Panc1 (cell line): ENCODE measurements at regions of chr14 and their contacts with region 1.

Region 1: DNA sequence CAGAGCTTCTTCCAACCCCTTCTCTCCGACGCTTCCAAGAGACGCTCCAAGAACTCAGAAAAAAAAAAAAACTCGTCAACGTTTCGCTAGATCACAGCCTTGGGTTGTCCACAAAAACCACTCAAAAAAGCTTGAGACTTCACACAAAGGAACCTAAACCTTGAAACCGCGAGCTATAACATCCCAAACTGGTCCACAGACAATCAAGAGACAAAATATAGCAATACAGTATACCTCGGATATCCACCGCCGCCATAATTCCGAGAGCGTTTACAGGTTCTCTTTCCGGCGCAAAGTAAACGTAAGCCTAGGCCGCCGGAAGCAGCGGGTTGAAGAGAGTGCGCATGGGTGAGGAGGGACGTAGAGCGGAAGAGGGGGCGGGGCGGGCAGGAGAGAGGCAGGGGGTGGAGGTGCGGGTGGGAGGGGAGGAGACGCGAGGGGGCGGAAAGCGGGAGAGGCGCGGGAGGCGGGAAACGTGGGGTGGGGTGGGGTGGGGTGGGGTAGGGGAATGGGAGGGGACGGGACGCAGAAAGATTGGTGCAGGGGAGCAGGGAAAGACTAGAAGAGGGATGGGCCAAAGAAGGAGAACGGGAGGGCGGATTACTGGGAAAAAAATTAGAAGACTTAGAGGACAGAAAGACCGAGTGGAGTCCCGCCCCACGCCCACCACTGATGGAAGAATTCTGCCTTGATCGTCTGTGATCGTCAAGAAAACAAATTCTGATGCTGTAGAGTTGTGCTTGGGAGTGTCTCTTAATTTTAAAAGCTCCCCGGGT is at the start of gene MED6:
- DNase-seq: peak; percentile 48
- ATAC-seq: peak; percentile 99
- H3K4me3 ChIP-seq: peak within 1 kb of the TSS; percentile 99 to 100
- H3K27ac ChIP-seq: peak within 1 kb of the TSS; percentile 98
- H3K4me1 ChIP-seq: peaks cover 11% of the 10 kb centered on the region
- H3K27me3 ChIP-seq: no peaks in the 10 kb centered on the region; the same call in 1 of the 2 replicates
- CTCF ChIP-seq: no peak
- total RNA-seq, gene MED6: 24.4 TPM

Region 2: GRCh38 chr14:70045844-70046535 is 554.6 kb before region 1 on chr14:
- CTCF ChIA-PET with region 1: interaction called, 12 read pairs
- POLR2A ChIA-PET with region 1: no interaction called
- in situ Hi-C with region 1: no loop called
- intact Hi-C with region 1: no loop called
- DNase-seq: no peak
- ATAC-seq: peak; percentile 98
- H3K4me3 ChIP-seq: no peak overlapping the region
- H3K27ac ChIP-seq: no peak overlapping the region
- H3K4me1 ChIP-seq: no peaks in the 10 kb centered on the region
- H3K27me3 ChIP-seq: peaks cover 2% of the 10 kb centered on the region
- CTCF ChIP-seq: peak; percentile 85

Region 3: DNA sequence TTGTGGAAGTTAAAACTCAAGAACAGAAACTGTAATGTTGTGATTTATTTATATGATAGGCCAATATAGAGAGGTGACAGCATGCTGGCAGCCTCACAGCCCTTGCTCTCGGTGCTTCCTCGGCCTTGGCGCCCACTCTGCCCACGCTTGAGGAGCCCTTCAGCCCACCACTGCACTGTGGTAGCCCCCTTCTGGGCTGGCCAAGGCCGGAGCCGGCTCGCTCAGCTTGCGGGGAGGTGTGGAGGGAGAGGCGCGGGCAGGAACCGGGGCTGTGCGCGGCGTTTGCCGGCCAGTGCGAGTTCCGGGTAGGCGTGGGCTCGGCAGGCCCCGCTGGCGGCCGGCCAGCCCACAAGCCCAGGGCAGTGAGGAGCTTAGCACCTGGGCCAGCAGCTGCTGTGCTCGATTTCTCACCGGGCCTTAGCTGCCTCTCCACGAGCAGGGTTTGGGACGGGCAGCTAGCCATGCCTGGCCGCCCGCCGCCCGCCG is 346.1 kb before region 1 on chr14:
- CTCF ChIA-PET with region 1: no interaction called
- POLR2A ChIA-PET with region 1: interaction called, 10 read pairs
- in situ Hi-C with region 1: no loop called
- intact Hi-C with region 1: no loop called
- DNase-seq: no peak
- ATAC-seq: peak; percentile 87
- H3K4me3 ChIP-seq: peak overlapping the region; percentile 37 to 42
- H3K27ac ChIP-seq: no peak overlapping the region
- H3K4me1 ChIP-seq: no peaks in the 10 kb centered on the region
- H3K27me3 ChIP-seq: 0 out of 2 replicates have a peak, but pooled peaks cover 6% of the 10 kb centered on the region
- CTCF ChIP-seq: no peak

Region 4: DNA sequence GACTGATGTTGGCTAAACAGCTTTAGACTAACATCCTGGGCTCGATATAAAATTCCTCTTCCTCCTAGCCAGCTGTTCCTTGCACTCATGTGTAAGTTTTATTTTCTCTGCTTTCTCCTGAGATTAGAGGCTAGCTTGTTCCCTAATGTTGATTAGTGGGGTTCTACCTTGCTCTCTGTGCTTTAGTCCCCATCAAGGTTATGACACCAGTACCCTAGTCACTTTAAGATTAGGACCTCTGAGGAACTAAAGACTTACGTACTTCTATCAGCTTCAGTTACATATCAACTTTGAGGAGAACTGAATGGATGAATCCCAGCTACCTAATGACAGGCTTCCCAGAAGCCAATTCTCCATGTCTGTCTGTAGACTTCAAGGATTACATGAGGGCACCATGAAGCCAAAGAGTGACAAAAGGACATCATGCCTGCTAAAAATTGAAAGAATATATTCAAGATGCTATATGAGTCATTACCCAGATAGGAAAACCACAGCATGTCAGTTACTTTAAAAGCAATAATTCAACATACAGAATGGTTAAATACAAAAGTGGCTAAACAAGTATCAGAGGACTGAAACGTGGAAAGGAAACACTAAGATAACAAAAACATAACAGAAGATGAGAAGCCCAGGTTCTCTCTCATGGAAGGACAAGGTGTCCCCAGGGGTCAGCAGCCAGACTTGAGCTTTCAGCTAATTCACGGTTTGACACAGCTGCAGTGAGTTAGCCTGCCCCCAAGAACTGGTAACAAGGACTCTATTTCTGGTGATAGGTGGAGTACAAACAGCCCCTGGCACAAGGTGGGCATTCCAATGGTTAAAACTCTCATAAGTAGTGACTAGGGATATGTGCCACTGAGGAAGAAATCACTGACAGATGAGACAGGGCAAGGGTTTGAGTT is 86.2 kb before region 1 on chr14:
- CTCF ChIA-PET with region 1: no interaction called
- POLR2A ChIA-PET with region 1: no interaction called
- in situ Hi-C with region 1: no loop called
- intact Hi-C with region 1: loop called (anchors 5 kb)
- DNase-seq: no peak
- ATAC-seq: no peak
- H3K4me3 ChIP-seq: no peak overlapping the region
- H3K27ac ChIP-seq: no peak overlapping the region
- H3K4me1 ChIP-seq: no peaks in the 10 kb centered on the region
- H3K27me3 ChIP-seq: no peaks in the 10 kb centered on the region
- CTCF ChIP-seq: no peak

Region 5: DNA sequence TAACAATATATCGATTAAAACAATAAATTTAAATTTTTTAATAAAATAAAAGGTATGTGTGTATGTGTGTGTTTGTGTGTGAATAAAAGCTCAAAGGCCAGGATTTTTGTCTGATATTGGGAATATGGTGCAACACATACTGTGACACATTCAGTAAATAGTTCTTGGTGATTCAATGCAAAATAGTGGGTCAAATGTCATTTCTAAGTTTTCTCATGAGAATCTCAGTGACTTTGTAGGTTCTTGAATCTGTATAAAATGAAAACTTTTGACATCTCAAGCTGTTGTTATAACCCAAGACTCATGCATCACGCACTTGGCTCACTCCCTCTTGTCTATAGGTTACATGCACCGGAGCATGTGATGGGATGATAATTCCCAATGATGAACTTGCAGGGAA is 16.1 kb after region 1 on chr14:
- CTCF ChIA-PET with region 1: no interaction called
- POLR2A ChIA-PET with region 1: no interaction called
- in situ Hi-C with region 1: no loop called
- intact Hi-C with region 1: no loop called
- DNase-seq: no peak
- ATAC-seq: no peak
- H3K4me3 ChIP-seq: no peak overlapping the region
- H3K27ac ChIP-seq: no peak overlapping the region
- H3K4me1 ChIP-seq: no peaks in the 10 kb centered on the region
- H3K27me3 ChIP-seq: peaks cover 8% of the 10 kb centered on the region
- CTCF ChIP-seq: no peak